ENCODE measurements at regions of chr15 and their contacts with region 1.

Region 1: GRCh38 chr15:34900748-34901147 is 68.8 kb downstream of the AQR start:
- DNase-seq: no peak

Region 2: GRCh38 chr15:34122771-34123183 is 778.0 kb before region 1 on chr15:
- in situ Hi-C with region 1: no loop called
- DNase-seq: no peak

Region 3: GRCh38 chr15:34616613-34617012 is 284.1 kb before region 1 on chr15:
- in situ Hi-C with region 1: loop called (anchors 25 kb)
- DNase-seq: peak; percentile 46